H1 (cell line): ENCODE measurements at regions of chr10 and their contacts with region 1.

Region 1: DNA sequence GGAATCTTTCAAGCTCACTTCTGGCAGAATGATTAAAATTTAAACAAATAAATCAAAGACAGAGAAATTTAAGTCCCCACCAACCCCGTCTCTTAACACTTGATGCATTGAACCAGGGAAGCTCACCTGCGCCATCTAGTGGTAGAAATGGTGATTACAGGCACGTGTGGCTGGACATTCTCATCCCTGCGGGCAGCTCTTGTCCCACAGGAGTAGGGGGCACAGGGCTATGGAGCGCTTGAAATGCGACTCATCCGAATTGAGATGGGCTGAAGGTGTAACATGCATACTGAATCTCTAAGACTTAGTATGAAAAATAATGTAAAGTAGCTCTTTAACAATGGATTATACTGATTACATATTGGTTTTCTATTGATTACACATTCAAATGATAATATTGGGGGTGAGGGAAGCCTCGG is 24.8 kb upstream of the SLIT1 start:
- DNase-seq: peak; percentile 67 to 97
- H3K4me3 ChIP-seq: no peak overlapping the region
- H3K27ac ChIP-seq: no peak overlapping the region
- H3K4me1 ChIP-seq: no peaks in the 10 kb centered on the region
- H3K27me3 ChIP-seq: no peaks in the 10 kb centered on the region
- CTCF ChIP-seq: peak; percentile 90 to 95 (median 94)
- EP300 ChIP-seq: no peak
- POLR2A ChIP-seq: no peak
- RAD21 ChIP-seq: peak; percentile 91 to 95

Region 2: DNA sequence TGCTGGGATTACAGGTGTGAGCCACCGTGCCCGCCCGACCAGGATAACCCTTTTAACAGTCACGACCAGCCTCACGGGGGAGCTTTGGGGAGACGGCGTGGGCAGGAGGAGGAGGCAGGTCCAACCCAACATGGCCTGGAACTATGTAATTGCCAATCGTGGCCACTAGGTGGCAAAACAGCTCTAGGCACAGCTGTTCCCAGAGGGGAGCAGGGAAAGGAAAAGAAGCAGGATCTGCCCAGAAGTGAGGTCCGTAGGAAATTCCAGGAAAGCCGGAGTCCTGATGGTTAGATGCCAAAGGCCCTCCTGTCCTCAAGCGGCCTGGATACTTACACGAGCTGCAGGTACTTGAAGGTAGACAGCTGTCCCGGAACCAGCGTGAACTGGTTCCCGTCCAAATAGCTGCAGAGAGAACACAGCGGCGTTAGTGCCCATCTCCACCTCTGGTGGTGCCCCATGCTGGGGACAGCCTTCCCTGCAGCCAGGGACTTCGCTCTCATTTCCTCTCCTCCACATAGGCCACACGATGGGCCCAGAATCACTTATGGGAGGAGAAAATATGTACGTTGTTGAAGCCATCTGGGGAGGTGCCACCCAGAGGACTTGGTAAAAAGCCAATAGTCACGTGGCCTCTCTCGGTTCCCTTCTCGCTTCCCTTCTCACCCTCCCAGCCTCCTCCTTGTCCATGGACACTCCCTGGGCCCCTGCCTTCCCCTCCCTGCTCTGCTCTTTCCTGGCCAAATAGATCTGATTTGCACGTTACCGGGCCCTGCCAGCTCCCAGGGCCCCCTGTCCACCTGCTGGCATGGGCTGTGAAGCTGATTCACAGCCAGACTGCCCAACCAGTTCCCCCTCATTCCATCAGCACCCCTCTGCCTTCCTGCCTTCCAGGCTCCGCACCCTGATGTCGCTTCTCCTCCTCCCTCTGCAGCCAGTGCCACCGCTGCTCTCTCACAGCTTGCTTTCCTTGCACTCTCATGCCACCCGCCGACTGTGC is 172.9 kb before region 1 on chr10:
- CTCF ChIA-PET with region 1: interaction called, 105 read pairs
- POLR2A ChIA-PET with region 1: no interaction called
- DNase-seq: peak; percentile 83 to 94
- H3K4me3 ChIP-seq: peak overlapping the region in 2 of 4 experiments; percentile 17 to 25; a peak in 2 of 8 replicates
- H3K27ac ChIP-seq: no peak overlapping the region
- H3K4me1 ChIP-seq: peaks cover under 1 to 7% (median 4%) of the 10 kb centered on the region in 4 experiments; a peak in 6 of 7 replicates
- H3K27me3 ChIP-seq: no peaks in the 10 kb centered on the region; a peak in 1 of 7 replicates
- CTCF ChIP-seq: peak; percentile 90 to 93 (median 90)
- EP300 ChIP-seq: no peak
- POLR2A ChIP-seq: no peak
- RAD21 ChIP-seq: peak; percentile 81 to 90

Region 3: DNA sequence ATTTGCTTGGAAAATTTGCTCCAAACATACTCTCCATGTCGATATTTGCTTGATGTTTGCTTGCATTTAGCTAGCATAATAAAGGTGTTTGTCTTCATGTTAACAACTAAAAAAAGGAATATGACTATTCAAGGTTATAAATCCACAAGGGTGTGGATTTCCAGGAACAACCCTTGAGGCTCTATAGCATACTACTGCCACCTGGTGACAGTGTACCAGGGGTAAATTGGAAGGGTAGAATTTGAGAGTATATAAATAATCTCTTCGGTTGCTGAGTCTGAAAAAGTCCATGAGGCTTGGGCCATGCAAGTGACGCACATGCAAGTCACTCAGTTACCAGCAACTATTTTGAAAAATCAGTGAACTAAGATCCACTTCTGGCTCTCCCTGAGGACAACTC is 93.2 kb before region 1 on chr10:
- CTCF ChIA-PET with region 1: interaction called, 17 read pairs
- POLR2A ChIA-PET with region 1: no interaction called
- DNase-seq: no peak
- H3K4me3 ChIP-seq: no peak overlapping the region
- H3K27ac ChIP-seq: no peak overlapping the region
- H3K4me1 ChIP-seq: peaks cover 0 to 4% (median 0%) of the 10 kb centered on the region in 4 experiments; a peak in 2 of 7 replicates
- H3K27me3 ChIP-seq: no peaks in the 10 kb centered on the region
- CTCF ChIP-seq: peak in 2 of 3 experiments; percentile 44 to 59; a peak in 3 of 4 replicates
- EP300 ChIP-seq: no peak
- POLR2A ChIP-seq: no peak
- RAD21 ChIP-seq: peak; percentile 72 to 73

Region 4: GRCh38 chr10:97138174-97138573 is 72.4 kb before region 1 on chr10:
- CTCF ChIA-PET with region 1: interaction called, 63 read pairs
- POLR2A ChIA-PET with region 1: no interaction called
- DNase-seq: no peak
- H3K4me3 ChIP-seq: no peak overlapping the region
- H3K27ac ChIP-seq: no peak overlapping the region
- H3K4me1 ChIP-seq: peaks cover 6 to 18% (median 14%) of the 10 kb centered on the region in 4 experiments
- H3K27me3 ChIP-seq: peaks cover 0 to 5% (median 2%) of the 10 kb centered on the region in 4 experiments; a peak in 3 of 7 replicates
- CTCF ChIP-seq: peak; percentile 65 to 87 (median 73)
- EP300 ChIP-seq: no peak
- POLR2A ChIP-seq: no peak
- RAD21 ChIP-seq: peak; percentile 59 to 64

Region 5: DNA sequence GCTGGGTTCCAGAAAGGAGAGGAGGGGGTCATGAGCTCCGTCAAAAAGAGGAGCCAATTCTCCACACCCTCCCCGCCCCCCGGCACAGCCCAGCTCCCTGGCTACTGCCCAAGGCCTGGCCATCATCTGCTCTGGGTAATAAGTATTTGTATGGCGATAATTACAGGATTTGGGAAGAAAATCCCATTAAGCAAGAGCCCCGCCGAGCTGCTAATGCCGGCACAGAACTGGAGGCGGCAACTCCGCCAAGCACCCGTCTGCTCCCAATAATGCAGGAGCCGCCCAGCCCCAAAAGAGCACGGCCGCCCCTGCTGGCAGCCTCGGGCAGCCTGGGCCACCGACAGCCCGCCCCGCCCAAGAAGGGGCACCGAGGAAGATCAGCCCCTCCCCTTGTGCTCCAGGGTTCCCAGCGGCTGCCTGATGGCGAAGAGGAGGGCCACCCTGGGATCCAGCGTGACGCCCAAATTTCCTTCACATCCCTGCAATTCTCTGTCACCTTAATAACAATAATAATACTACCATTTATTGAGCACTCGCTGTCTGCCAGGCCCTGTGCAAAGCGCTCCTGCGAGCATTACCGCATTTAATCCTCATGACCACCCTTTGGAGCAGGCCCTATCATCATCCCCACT is 30.7 kb before region 1 on chr10:
- CTCF ChIA-PET with region 1: interaction called, 141 read pairs
- POLR2A ChIA-PET with region 1: no interaction called
- DNase-seq: peak; percentile 31 to 87
- H3K4me3 ChIP-seq: peak overlapping the region in 3 of 4 experiments; percentile 16 to 48 (median 27); a peak in 5 of 8 replicates
- H3K27ac ChIP-seq: no peak overlapping the region
- H3K4me1 ChIP-seq: peaks cover under 1 to 3% (median 2%) of the 10 kb centered on the region in 4 experiments; a peak in 6 of 7 replicates
- H3K27me3 ChIP-seq: peaks cover 10 to 30% (median 22%) of the 10 kb centered on the region in 4 experiments
- CTCF ChIP-seq: peak; percentile 80 to 84 (median 83)
- EP300 ChIP-seq: no peak
- POLR2A ChIP-seq: no peak
- RAD21 ChIP-seq: peak; percentile 80 to 88

Region 6: DNA sequence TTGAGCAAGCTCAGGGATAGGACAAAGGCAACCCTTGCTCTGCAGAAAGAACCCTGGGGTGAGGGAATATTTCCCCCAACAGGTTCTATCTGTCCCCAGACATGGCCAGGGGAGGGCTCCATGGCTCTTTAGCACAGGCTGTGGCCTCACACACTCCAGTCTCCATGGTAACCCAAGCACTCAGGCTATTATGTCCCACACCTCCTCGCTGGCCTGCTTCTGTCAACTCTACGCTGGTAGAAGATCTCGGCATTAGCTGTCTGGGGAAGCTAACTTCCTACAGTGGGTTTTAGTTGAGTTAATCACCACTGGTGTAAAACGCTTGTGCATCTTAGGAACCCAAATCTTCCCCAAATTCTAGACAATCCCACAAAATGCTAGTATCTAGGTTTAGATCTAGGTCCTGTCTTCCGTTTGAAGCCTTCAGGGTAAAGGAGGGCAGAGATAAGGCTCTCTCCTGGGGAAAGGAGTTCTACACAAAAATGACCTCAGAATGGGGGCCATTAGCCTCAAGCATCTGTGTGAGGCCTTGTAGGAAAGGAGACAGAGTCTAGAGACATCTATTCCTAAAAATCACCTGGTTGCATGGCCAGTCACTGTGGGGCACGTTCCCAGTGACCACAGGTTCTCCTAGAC is 11.9 kb after region 1 on chr10:
- CTCF ChIA-PET with region 1: interaction called, 23 read pairs
- POLR2A ChIA-PET with region 1: interaction called, 6 read pairs
- DNase-seq: peak in 1 of 2 experiments; percentile 17
- H3K4me3 ChIP-seq: no peak overlapping the region; a peak in 1 of 8 replicates
- H3K27ac ChIP-seq: no peak overlapping the region
- H3K4me1 ChIP-seq: peaks cover 0 to 7% (median 4%) of the 10 kb centered on the region in 4 experiments; a peak in 6 of 7 replicates
- H3K27me3 ChIP-seq: no peaks in the 10 kb centered on the region
- CTCF ChIP-seq: peak in 2 of 3 experiments; percentile 23 to 37; a peak in 2 of 4 replicates
- EP300 ChIP-seq: no peak
- POLR2A ChIP-seq: no peak
- RAD21 ChIP-seq: peak; percentile 50; a peak in 3 of 4 replicates

Region 7: GRCh38 chr10:97307866-97308780 is 97.6 kb after region 1 on chr10:
- CTCF ChIA-PET with region 1: no interaction called
- POLR2A ChIA-PET with region 1: no interaction called
- DNase-seq: no peak
- H3K4me3 ChIP-seq: no peak overlapping the region
- H3K27ac ChIP-seq: no peak overlapping the region
- H3K4me1 ChIP-seq: no peaks in the 10 kb centered on the region
- H3K27me3 ChIP-seq: no peaks in the 10 kb centered on the region; a peak in 1 of 7 replicates
- CTCF ChIP-seq: no peak
- EP300 ChIP-seq: no peak
- POLR2A ChIP-seq: no peak
- RAD21 ChIP-seq: no peak